ENCODE measurements at regions of chr12 and their contacts with region 1.

Region 1: GRCh38 chr12:68451261-68452077 is 119.3 kb upstream of the MDM1 start:
- DNase-seq: peak; percentile 67
- ATAC-seq: peak; percentile 80
- H3K4me3 Mint-ChIP-seq: peak overlapping the region; percentile 46
- H3K27ac Mint-ChIP-seq: peak overlapping the region; percentile 93
- H3K4me1 Mint-ChIP-seq: peaks cover 87% of the 10 kb centered on the region
- H3K27me3 Mint-ChIP-seq: no peaks in the 10 kb centered on the region

Region 2: DNA sequence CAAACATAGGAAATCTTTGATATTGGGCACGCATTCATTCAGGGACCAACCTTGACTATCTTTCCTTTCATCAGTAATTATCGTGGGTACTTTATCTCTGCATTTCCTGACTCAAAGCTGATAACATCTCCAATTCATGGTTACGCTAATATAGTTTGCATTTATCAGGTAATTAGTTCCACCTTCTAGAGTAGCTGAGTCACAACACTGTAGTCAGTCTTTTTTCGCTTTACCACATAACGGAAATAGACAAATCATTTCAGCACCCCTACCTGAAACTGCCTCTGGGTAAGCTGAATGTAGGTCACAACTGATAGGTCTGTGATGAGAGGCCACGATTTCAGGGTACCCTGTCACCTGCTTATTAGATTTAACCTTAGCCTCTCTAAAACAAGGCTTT is 161.3 kb before region 1 on chr12:
- CTCF ChIA-PET with region 1: no interaction called
- POLR2A ChIA-PET with region 1: interaction called, 3 read pairs
- intact Hi-C with region 1: loop called in 1 of 2 experiments (anchors 1 kb)
- DNase-seq: peak; percentile 49
- ATAC-seq: peak; percentile 91
- H3K4me3 Mint-ChIP-seq: no peak overlapping the region
- H3K27ac Mint-ChIP-seq: no peak overlapping the region
- H3K4me1 Mint-ChIP-seq: peaks cover 39% of the 10 kb centered on the region
- H3K27me3 Mint-ChIP-seq: peaks cover 13% of the 10 kb centered on the region

Region 3: GRCh38 chr12:68374307-68374982 is 77.0 kb before region 1 on chr12:
- CTCF ChIA-PET with region 1: interaction called, 4 read pairs
- POLR2A ChIA-PET with region 1: interaction called, 4 read pairs
- intact Hi-C with region 1: loop called (anchors 1 kb)
- DNase-seq: peak; percentile 79
- ATAC-seq: peak; percentile 89
- H3K4me3 Mint-ChIP-seq: no peak overlapping the region
- H3K27ac Mint-ChIP-seq: peak overlapping the region; percentile 89
- H3K4me1 Mint-ChIP-seq: peaks cover 48% of the 10 kb centered on the region
- H3K27me3 Mint-ChIP-seq: no peaks in the 10 kb centered on the region

Region 4: GRCh38 chr12:68393417-68393816 is 58.1 kb before region 1 on chr12:
- CTCF ChIA-PET with region 1: no interaction called
- POLR2A ChIA-PET with region 1: no interaction called
- intact Hi-C with region 1: no loop called
- DNase-seq: no peak
- ATAC-seq: no peak
- H3K4me3 Mint-ChIP-seq: no peak overlapping the region
- H3K27ac Mint-ChIP-seq: no peak overlapping the region
- H3K4me1 Mint-ChIP-seq: peaks cover 5% of the 10 kb centered on the region
- H3K27me3 Mint-ChIP-seq: no peaks in the 10 kb centered on the region

Region 5: GRCh38 chr12:68538726-68539614 is 87.5 kb after region 1 on chr12:
- CTCF ChIA-PET with region 1: interaction called, 3 read pairs
- POLR2A ChIA-PET with region 1: no interaction called
- intact Hi-C with region 1: loop called (anchors 1 kb)
- DNase-seq: peak; percentile 74
- ATAC-seq: peak; percentile 84
- H3K4me3 Mint-ChIP-seq: peak overlapping the region; percentile 33
- H3K27ac Mint-ChIP-seq: peak overlapping the region; percentile 67
- H3K4me1 Mint-ChIP-seq: peaks cover 45% of the 10 kb centered on the region
- H3K27me3 Mint-ChIP-seq: no peaks in the 10 kb centered on the region

Region 6: DNA sequence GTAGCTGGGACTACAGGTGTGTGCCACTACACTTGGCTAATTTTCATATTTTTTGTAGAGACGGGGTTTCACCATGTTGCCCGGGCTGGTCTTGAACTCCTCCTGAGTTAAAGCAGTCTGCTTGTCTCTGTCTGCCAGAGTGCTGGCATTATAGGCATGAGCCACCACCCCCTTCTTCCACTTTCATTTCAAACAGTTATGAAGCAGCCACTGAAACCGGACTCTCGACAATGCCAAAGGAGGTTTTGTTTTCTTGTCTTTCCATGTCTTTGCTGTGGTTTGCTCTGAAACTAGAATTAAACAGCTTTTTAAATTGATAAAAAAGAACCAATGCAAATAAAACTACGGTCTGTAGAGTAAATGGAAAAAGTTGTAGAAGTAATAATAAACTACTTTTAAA is 189.7 kb after region 1 on chr12:
- CTCF ChIA-PET with region 1: no interaction called
- POLR2A ChIA-PET with region 1: no interaction called
- intact Hi-C with region 1: loop called in 1 of 2 experiments (anchors 1 kb)
- DNase-seq: peak; percentile 71
- ATAC-seq: peak; percentile 97
- H3K4me3 Mint-ChIP-seq: peak overlapping the region; percentile 46
- H3K27ac Mint-ChIP-seq: peak overlapping the region; percentile 75
- H3K4me1 Mint-ChIP-seq: peaks cover 84% of the 10 kb centered on the region
- H3K27me3 Mint-ChIP-seq: no peaks in the 10 kb centered on the region

Region 7: GRCh38 chr12:68807576-68808387 is 356.3 kb after region 1 on chr12 and contains the start of gene MDM2:
- CTCF ChIA-PET with region 1: no interaction called
- POLR2A ChIA-PET with region 1: no interaction called
- intact Hi-C with region 1: loop called (anchors 1 kb)
- DNase-seq: peak; percentile 96
- ATAC-seq: peak; percentile 89
- H3K4me3 Mint-ChIP-seq: peak within 1 kb of the TSS; percentile 88
- H3K27ac Mint-ChIP-seq: peak within 1 kb of the TSS; percentile 99
- H3K4me1 Mint-ChIP-seq: peaks cover 34% of the 10 kb centered on the region
- H3K27me3 Mint-ChIP-seq: no peaks in the 10 kb centered on the region
- total RNA-seq, gene MDM2: 114 to 119 TPM